ENCODE measurements at regions of chr4 and their contacts with region 1.

Region 1: GRCh38 chr4:6709230-6710114 is at the start of gene MRFAP1L1:
- DNase-seq: peak; percentile 98
- ATAC-seq: peak; percentile 73
- H3K4me3 Mint-ChIP-seq: peak within 1 kb of the TSS; percentile 98
- H3K27ac Mint-ChIP-seq: peak within 1 kb of the TSS; percentile 98
- H3K4me1 Mint-ChIP-seq: peaks cover 46% of the 10 kb centered on the region
- H3K27me3 Mint-ChIP-seq: no peaks in the 10 kb centered on the region
- total RNA-seq, gene MRFAP1L1: 36.4 to 45.0 TPM

Region 2: GRCh38 chr4:6574747-6575502 is 134.5 kb before region 1 on chr4 and contains the start of gene MAN2B2:
- CTCF ChIA-PET with region 1: no interaction called
- POLR2A ChIA-PET with region 1: no interaction called
- intact Hi-C with region 1: loop called in 1 of 2 experiments (anchors 2 kb)
- DNase-seq: peak; percentile 89
- ATAC-seq: peak; percentile 96
- H3K4me3 Mint-ChIP-seq: peak within 1 kb of the TSS; percentile 78
- H3K27ac Mint-ChIP-seq: peak within 1 kb of the TSS; percentile 74
- H3K4me1 Mint-ChIP-seq: peaks cover 6% of the 10 kb centered on the region
- H3K27me3 Mint-ChIP-seq: no peaks in the 10 kb centered on the region
- total RNA-seq, gene MAN2B2: 13.0 to 14.6 TPM

Region 3: GRCh38 chr4:6640292-6641163 is 68.9 kb before region 1 on chr4 and contains the start of gene MRFAP1:
- CTCF ChIA-PET with region 1: interaction called, 6 read pairs
- POLR2A ChIA-PET with region 1: interaction called, 16 read pairs
- intact Hi-C with region 1: loop called (anchors 1 kb)
- DNase-seq: peak; percentile 97
- ATAC-seq: peak; percentile 86
- H3K4me3 Mint-ChIP-seq: peak within 1 kb of the TSS; percentile 96
- H3K27ac Mint-ChIP-seq: peak within 1 kb of the TSS; percentile 100
- H3K4me1 Mint-ChIP-seq: peaks cover 27% of the 10 kb centered on the region
- H3K27me3 Mint-ChIP-seq: no peaks in the 10 kb centered on the region
- total RNA-seq, gene MRFAP1: 66.8 to 122 TPM

Region 4: DNA sequence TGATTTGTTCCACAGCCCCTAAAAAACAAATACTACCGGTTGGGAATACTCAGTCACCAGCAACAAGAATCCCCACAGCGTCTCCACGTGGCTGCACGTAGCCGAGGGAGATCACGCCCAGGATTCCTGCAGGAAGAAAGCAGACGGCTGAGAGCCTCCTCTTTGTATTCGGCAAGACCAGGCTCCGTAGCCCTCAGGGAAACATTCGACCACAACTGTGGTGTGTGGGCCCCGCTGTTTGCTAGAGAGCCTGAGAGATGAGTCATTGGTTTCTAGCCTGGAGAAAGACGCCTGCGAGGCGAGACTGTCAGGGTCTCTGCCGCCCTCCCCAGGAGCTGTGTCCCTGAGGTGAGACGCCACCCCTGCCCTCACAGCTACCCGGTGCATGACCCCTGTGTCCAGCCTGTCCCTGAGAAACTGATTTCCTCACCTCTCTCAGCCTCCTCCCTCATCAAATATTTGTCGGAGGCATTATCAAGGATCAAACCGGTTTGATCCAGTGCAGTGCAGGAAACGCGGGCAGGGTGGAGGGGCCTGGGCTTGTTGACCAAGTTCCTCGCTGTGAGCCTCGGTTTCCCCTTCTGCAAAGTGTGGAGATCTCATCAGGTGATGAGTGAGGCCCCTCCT is 20.5 kb before region 1 on chr4:
- CTCF ChIA-PET with region 1: interaction called, 12 read pairs
- POLR2A ChIA-PET with region 1: interaction called, 4 read pairs
- intact Hi-C with region 1: loop called (anchors 1 to 2 kb)
- DNase-seq: peak; percentile 90
- ATAC-seq: peak; percentile 88
- H3K4me3 Mint-ChIP-seq: peak overlapping the region; percentile 39
- H3K27ac Mint-ChIP-seq: peak overlapping the region; percentile 91
- H3K4me1 Mint-ChIP-seq: peaks cover 57% of the 10 kb centered on the region
- H3K27me3 Mint-ChIP-seq: no peaks in the 10 kb centered on the region

Region 5: GRCh38 chr4:6695660-6696630 is 13.5 kb before region 1 on chr4:
- CTCF ChIA-PET with region 1: interaction called, 12 read pairs
- POLR2A ChIA-PET with region 1: interaction called, 8 read pairs
- intact Hi-C with region 1: loop called in 1 of 2 experiments (anchors 1 kb)
- DNase-seq: peak; percentile 62
- ATAC-seq: peak; percentile 74
- H3K4me3 Mint-ChIP-seq: peak overlapping the region; percentile 43
- H3K27ac Mint-ChIP-seq: peak overlapping the region; percentile 99
- H3K4me1 Mint-ChIP-seq: peaks cover 77% of the 10 kb centered on the region
- H3K27me3 Mint-ChIP-seq: no peaks in the 10 kb centered on the region

Region 6: DNA sequence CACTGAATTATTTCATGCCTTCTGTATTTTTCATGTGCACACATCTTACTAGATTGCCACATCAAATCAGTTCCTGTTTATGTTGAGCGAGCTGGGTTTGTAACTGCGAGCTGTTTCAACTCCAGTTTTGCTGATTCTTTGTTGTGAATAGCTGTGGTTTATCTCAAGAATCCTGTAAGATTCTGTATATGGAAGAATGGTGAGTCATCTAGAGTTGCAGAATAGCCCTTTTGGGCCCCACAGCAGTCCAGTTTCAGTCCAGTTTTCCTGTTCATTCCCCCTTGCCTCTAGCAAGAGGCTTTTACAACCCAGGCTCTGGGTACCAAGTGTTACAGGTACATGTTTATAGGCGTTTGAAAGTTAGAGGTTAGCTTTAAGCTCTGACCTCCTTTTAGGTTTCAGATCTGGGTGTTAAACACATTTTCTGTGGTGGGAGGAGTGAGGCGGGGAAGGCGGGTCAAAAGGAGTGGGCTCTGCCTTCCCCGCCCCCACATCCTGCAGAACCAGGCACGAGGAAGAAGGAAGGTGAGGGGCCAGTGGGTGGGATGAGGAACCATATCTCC is 232.8 kb after region 1 on chr4:
- CTCF ChIA-PET with region 1: no interaction called
- POLR2A ChIA-PET with region 1: no interaction called
- intact Hi-C with region 1: no loop called
- DNase-seq: peak; percentile 52
- ATAC-seq: peak; percentile 81
- H3K4me3 Mint-ChIP-seq: peak overlapping the region; percentile 18
- H3K27ac Mint-ChIP-seq: peak overlapping the region; percentile 79
- H3K4me1 Mint-ChIP-seq: peaks cover 61% of the 10 kb centered on the region
- H3K27me3 Mint-ChIP-seq: no peaks in the 10 kb centered on the region

Measured in activated CD4-positive, alpha-beta T cell treated with anti-CD3 and anti-CD28 coated beads for 36 hours (primary cell).